GM12878 (cell line): ENCODE measurements at regions of chr3 and their contacts with region 1.

Region 1: GRCh38 chr3:160956806-160957205 is 148.3 kb downstream of the B3GALNT1 start:
- DNase-seq: no peak
- ATAC-seq: peak; percentile 79
- H3K4me3 ChIP-seq: no peak overlapping the region
- H3K27ac ChIP-seq: no peak overlapping the region
- H3K4me1 ChIP-seq: no peaks in the 10 kb centered on the region
- H3K27me3 ChIP-seq: no peaks in the 10 kb centered on the region
- CTCF ChIP-seq: peak; percentile 44 to 55 (median 47); a peak in 5 of 6 replicates
- EP300 ChIP-seq: no peak
- POLR2A ChIP-seq: no peak
- RAD21 ChIP-seq: peak; percentile 62

Region 2: GRCh38 chr3:161096771-161097355 is 140.1 kb after region 1 on chr3:
- CTCF ChIA-PET with region 1: interaction called, 4 read pairs
- POLR2A ChIA-PET with region 1: no interaction called
- RAD21 ChIA-PET with region 1: interaction called, 3 read pairs
- SMC1A ChIA-PET with region 1: no interaction called
- in situ Hi-C with region 1: no loop called
- intact Hi-C with region 1: loop called (anchors 5 kb)
- DNase-seq: no peak
- ATAC-seq: peak; percentile 69
- H3K4me3 ChIP-seq: no peak overlapping the region
- H3K27ac ChIP-seq: no peak overlapping the region
- H3K4me1 ChIP-seq: no peaks in the 10 kb centered on the region
- H3K27me3 ChIP-seq: no peaks in the 10 kb centered on the region; a peak in 1 of 4 replicates
- CTCF ChIP-seq: peak; percentile 41 to 43 (median 42); a peak in 5 of 6 replicates
- EP300 ChIP-seq: no peak
- POLR2A ChIP-seq: no peak
- RAD21 ChIP-seq: no peak

Region 3: DNA sequence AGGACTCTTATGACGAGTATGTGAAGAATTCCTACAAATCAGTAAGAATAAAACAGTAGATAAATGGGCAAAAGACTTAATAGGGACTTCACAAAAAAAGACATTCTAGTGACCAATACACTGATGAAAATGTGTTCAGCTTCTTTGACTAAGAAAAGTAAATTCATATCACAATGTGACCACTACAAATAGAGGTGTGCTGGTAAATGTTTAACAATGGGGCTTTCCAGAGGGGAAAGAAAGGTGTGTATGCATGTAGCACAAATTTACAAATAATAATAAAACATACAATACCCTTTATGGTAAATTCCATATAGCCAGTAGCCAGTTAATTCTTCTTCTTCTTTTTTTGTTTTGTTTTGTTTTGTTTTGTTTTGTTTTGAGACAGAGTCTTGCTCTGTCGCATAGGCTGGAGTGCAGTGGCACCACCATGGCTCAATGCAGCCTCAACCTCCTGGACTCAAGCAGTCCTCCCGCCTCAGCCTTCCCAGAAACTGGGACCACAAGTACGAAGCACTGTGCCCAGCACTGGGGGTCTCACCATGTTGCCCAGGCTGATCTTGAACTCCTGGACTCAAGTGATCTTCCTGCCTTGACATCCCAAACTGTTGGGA is 246.8 kb after region 1 on chr3:
- CTCF ChIA-PET with region 1: no interaction called
- POLR2A ChIA-PET with region 1: no interaction called
- RAD21 ChIA-PET with region 1: no interaction called
- SMC1A ChIA-PET with region 1: interaction called, 3 read pairs
- in situ Hi-C with region 1: no loop called
- intact Hi-C with region 1: loop called (anchors 10 kb)
- DNase-seq: no peak
- ATAC-seq: peak; percentile 92
- H3K4me3 ChIP-seq: no peak overlapping the region
- H3K27ac ChIP-seq: no peak overlapping the region
- H3K4me1 ChIP-seq: no peaks in the 10 kb centered on the region
- H3K27me3 ChIP-seq: no peaks in the 10 kb centered on the region
- CTCF ChIP-seq: no peak
- EP300 ChIP-seq: no peak
- POLR2A ChIP-seq: no peak
- RAD21 ChIP-seq: no peak